ENCODE measurements at regions of chr3 and their contacts with region 1.

Region 1: DNA sequence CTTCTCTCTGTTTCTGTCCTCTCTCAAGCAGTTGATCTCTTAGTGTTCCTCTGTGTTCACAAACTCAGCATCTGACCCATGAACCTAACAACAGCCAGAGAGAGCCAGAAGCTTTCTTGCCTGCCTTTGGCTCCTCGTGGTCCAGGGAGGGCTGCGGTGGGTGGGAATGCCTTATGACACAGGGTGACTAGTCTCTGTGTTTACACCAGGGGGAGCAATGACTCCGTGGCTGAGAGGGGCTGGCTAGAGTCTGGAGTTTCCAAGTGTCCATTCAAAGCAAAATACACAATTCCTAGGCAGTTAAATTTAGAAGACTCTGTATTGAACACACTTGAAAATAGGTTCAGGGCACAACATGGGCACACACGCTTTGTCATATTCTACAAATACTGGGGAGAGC is 370.0 kb upstream of the FRG2C start:
- DNase-seq: peak; percentile 19 to 62 (median 34)
- ATAC-seq: peak; percentile 67 to 99 (median 96)
- H3K4me3 ChIP-seq: no peak overlapping the region
- H3K27ac ChIP-seq: no peak overlapping the region
- H3K4me1 ChIP-seq: no peaks in the 10 kb centered on the region
- H3K27me3 ChIP-seq: peaks cover 0 to 3% (median 0%) of the 10 kb centered on the region in 9 donors
- CTCF ChIP-seq: peak; percentile 42 to 85 (median 76)
- POLR2A ChIP-seq: no peak

Region 2: DNA sequence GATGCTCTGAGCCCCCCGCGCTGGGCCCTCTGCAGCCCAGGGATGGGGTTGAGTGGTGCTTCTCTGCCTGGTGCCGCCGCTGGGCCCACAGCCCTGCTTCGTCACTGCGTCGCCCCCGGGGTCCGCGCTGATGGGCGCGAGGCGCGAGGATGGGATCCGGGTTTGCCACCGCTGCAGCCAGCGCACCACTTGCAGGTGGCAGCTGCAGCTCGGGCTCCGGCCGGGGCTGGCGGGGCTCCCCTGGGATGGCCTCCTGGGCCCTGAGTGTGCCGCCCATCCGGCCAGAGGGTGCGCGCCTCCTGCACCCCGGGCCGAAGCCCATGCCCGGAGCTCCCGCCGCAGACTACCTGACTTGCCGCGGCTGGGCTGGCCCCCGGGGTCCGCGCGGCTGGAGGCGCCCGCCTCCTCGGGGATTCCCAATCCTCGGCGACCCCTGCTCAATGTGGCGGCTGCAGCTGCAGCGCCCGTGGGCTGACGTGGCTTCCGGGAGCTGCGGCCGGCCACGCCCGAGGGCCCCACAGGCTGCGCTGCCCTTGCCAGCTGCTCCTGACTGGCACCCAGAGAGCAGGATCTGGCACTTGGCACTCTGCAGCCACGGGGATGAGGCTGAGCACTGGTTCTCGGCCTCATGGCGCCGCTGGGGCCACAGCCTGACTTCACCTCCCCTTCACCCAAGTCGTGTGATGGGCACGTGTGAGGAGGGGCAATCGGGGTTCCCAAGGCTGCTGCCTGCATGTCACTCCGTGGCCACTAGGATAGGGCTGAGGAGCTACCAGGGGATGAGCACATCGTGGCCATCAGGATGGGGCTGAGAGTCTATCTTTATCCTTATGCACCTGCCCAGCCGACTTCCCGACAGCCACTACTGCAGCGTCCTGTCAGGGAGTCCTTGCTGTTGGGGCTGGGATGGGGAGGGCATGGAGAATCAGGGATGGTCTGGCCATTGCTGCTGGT is 102.1 kb after region 1 on chr3:
- intact Hi-C with region 1: no loop called
- DNase-seq: no peak
- ATAC-seq: no peak
- H3K4me3 ChIP-seq: peak overlapping the region in 4 of 12 donors; percentile 10 to 37 (median 24)
- H3K27ac ChIP-seq: no peak overlapping the region
- H3K4me1 ChIP-seq: peaks cover 0 to 22% (median 5%) of the 10 kb centered on the region in 12 donors
- H3K27me3 ChIP-seq: peaks cover 0 to 5% (median 0%) of the 10 kb centered on the region in 9 donors
- CTCF ChIP-seq: no peak
- POLR2A ChIP-seq: no peak

Region 3: GRCh38 chr3:75650191-75650590 is 356.1 kb after region 1 on chr3:
- intact Hi-C with region 1: loop called in 3 of 10 experiments (anchors 10 kb)
- DNase-seq: no peak
- ATAC-seq: no peak
- H3K4me3 ChIP-seq: no peak overlapping the region
- H3K27ac ChIP-seq: no peak overlapping the region
- H3K4me1 ChIP-seq: peaks cover 0 to 2% (median 0%) of the 10 kb centered on the region in 12 donors
- H3K27me3 ChIP-seq: peaks cover 0 to 15% (median 5%) of the 10 kb centered on the region in 9 donors
- CTCF ChIP-seq: no peak
- POLR2A ChIP-seq: no peak